H1 (cell line): ENCODE measurements at regions of chr1 and their contacts with region 1.

Region 1: GRCh38 chr1:156421062-156421938 is 52.3 kb downstream of the RHBG start:
- DNase-seq: peak in 1 of 2 experiments; percentile 93
- H3K4me3 ChIP-seq: peak overlapping the region; percentile 35 to 61 (median 45)
- H3K27ac ChIP-seq: peak overlapping the region; percentile 4; the same call in 1 of the 2 replicates
- H3K4me1 ChIP-seq: peaks cover 10 to 26% (median 16%) of the 10 kb centered on the region in 4 experiments
- H3K27me3 ChIP-seq: peaks cover 43 to 73% (median 65%) of the 10 kb centered on the region in 4 experiments
- CTCF ChIP-seq: no peak
- EP300 ChIP-seq: peak in 1 of 2 experiments; percentile 9; a peak in 1 of 3 replicates
- POLR2A ChIP-seq: peak; percentile 69 to 87
- RAD21 ChIP-seq: no peak

Region 2: DNA sequence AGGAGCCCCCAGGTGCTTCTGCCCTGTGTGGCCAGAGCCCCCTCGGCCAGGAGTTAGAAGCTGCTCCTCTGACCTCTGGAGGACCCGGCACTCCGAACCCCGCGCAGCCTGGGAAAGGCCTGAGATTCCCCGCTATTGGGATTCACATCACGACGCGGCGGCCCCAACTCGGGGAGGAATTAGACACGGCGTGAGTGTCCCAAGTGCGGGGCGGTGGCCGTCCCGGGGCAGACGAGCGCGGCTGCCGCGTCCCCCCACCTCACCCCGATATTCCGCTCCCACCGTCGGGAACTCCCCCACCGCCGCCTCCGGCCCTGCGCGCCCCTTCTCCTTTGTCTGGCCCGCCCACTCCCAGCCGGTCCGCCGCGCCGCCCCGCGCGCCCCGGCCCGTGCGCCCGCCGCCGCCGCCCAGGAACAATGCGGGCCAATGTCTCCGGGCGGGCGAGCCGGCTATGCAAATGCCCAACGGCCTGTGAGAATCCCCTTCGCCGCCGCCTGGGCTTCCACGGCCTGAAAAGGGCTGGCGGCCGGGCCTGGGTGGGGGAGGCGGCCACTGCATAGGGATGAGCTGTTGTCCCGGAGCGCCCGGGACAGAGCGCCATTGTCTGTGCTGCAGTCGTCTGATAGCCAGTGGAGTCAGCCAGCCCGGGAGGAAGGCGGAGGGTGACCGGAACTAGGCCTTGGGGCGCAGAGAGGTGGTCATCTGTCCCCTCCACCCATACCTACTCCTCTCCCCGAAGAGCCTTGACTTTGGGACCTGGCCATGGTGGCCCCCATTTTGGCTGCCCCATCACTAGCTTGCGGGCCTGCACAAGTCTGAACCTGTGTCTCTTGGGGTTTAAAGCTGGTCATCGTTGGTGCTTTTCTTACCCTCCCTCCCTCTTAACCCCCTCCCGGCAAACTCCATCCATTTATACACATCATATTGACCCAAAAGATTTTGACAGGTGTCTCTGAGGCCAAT is 32.8 kb before region 1 on chr1:
- CTCF ChIA-PET with region 1: interaction called, 517 read pairs
- POLR2A ChIA-PET with region 1: interaction called, 26 read pairs
- DNase-seq: peak in 1 of 2 experiments; percentile 74
- H3K4me3 ChIP-seq: peak overlapping the region; percentile 23 to 59 (median 32)
- H3K27ac ChIP-seq: no peak overlapping the region
- H3K4me1 ChIP-seq: peaks cover 10 to 46% (median 33%) of the 10 kb centered on the region in 4 experiments
- H3K27me3 ChIP-seq: peaks cover 14 to 64% (median 56%) of the 10 kb centered on the region in 4 experiments
- CTCF ChIP-seq: no peak
- EP300 ChIP-seq: no peak
- POLR2A ChIP-seq: no peak
- RAD21 ChIP-seq: no peak

Region 3: DNA sequence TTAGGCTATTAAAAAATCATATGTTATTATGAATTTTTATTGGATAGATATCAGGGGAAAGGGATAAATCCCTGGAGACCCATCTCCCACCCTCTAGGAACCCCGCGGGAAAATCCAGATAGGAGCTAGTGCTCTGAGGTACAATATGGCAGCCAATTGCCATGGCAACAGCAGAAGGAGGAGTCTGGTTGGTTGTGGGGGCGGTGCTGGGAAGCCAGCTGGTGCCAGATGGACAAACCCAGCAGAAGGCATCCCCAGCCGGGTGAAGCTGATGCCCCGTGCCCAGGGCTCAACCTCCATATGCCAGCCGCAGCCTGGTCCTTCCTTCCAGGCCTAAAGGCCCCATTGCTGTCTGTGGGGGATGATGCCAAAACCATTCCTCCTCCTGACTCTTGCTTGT is 14.0 kb before region 1 on chr1:
- CTCF ChIA-PET with region 1: interaction called, 517 read pairs
- POLR2A ChIA-PET with region 1: interaction called, 4 read pairs
- DNase-seq: no peak
- H3K4me3 ChIP-seq: no peak overlapping the region
- H3K27ac ChIP-seq: no peak overlapping the region
- H3K4me1 ChIP-seq: peaks cover 0 to 6% (median under 1%) of the 10 kb centered on the region in 4 experiments; a peak in 4 of 7 replicates
- H3K27me3 ChIP-seq: peaks cover 0 to 2% (median 0%) of the 10 kb centered on the region in 4 experiments; a peak in 3 of 7 replicates
- CTCF ChIP-seq: no peak
- EP300 ChIP-seq: no peak
- POLR2A ChIP-seq: no peak
- RAD21 ChIP-seq: no peak

Region 4: GRCh38 chr1:156435545-156436141 is 14.3 kb after region 1 on chr1:
- CTCF ChIA-PET with region 1: interaction called, 63 read pairs
- POLR2A ChIA-PET with region 1: interaction called, 74 read pairs
- DNase-seq: no peak
- H3K4me3 ChIP-seq: peak overlapping the region in 1 of 4 experiments; percentile 39; a peak in 2 of 8 replicates
- H3K27ac ChIP-seq: no peak overlapping the region
- H3K4me1 ChIP-seq: peaks cover 13 to 44% (median 17%) of the 10 kb centered on the region in 4 experiments
- H3K27me3 ChIP-seq: peaks cover 86 to 100% (median 98%) of the 10 kb centered on the region in 4 experiments
- CTCF ChIP-seq: no peak
- EP300 ChIP-seq: no peak
- POLR2A ChIP-seq: no peak
- RAD21 ChIP-seq: no peak